ENCODE measurements at regions of chr13 and their contacts with region 1.

Region 1: DNA sequence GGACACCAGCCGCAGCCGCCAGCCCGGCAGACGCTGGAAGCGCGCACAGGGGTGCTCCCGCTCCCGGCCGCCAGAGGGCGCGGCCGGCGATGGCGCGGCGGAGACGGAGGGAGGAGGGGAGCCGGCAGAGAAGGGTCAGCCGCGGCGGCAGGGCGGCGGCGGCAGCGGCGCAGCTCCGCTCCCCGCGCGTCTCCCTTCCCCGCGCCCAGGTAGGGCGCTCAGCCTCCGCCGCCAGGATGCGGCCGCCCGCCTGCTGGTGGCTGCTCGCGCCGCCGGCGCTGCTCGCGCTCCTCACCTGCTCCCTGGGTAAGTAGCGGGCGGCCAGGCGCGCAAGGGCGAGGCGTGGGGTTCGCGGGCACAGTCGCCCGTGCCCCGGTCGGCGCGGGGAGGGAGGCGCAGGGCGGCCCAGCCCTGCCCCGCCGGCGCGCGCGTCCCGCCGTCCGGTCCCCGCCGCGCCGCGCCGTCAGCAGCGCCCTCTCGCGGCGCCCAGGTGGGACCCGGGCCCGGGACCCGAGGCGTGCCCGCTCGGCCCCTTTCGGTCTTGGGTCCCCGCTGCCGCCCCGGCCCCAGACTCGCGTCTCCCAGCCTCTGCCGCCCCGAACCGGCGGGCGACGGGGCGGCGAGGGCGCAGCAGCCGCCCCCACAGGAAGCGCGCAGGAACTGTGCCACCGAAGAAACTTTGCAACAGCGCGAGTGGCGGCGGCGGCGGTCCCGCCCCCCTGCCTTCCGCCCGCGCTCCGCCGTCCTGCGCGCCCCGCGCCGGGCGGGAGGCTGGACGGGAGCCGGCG is at the start of gene B3GLCT:
- DNase-seq: peak; percentile 74 to 86 (median 84)
- H3K4me3 ChIP-seq: peak within 1 kb of the TSS; percentile 19 to 60
- H3K4me3 Mint-ChIP-seq: peak within 1 kb of the TSS; percentile 83 to 90 (median 88)
- H3K27ac ChIP-seq: peak within 1 kb of the TSS; percentile 83
- H3K27ac Mint-ChIP-seq: peak within 1 kb of the TSS; percentile 90 to 96 (median 91)
- H3K4me1 ChIP-seq: peaks cover 13% of the 10 kb centered on the region
- H3K4me1 Mint-ChIP-seq: peaks cover 19 to 23% (median 22%) of the 10 kb centered on the region in 4 donors
- H3K27me3 ChIP-seq: no peaks in the 10 kb centered on the region
- H3K27me3 Mint-ChIP-seq: no peaks in the 10 kb centered on the region
- total RNA-seq, gene B3GLCT: 5.2 to 5.8 TPM

Region 2: GRCh38 chr13:31161828-31162590 is 38.0 kb before region 1 on chr13 and contains the start of gene HSPH1:
- CTCF ChIA-PET with region 1: interaction called, 6 read pairs
- POLR2A ChIA-PET with region 1: interaction called, 37 read pairs
- intact Hi-C with region 1: loop called (anchors 1 kb)
- DNase-seq: peak; percentile 99 to 100 (median 100)
- H3K4me3 ChIP-seq: peak within 1 kb of the TSS; percentile 79 to 96
- H3K4me3 Mint-ChIP-seq: peak within 1 kb of the TSS; percentile 96 to 99 (median 98)
- H3K27ac ChIP-seq: peak within 1 kb of the TSS; percentile 95
- H3K27ac Mint-ChIP-seq: peak within 1 kb of the TSS; percentile 97 to 100 (median 99)
- H3K4me1 ChIP-seq: peaks cover 37% of the 10 kb centered on the region
- H3K4me1 Mint-ChIP-seq: peaks cover 23 to 54% (median 29%) of the 10 kb centered on the region in 4 donors
- H3K27me3 ChIP-seq: no peaks in the 10 kb centered on the region
- H3K27me3 Mint-ChIP-seq: no peaks in the 10 kb centered on the region
- total RNA-seq, gene HSPH1: 68.6 to 75.5 TPM

Region 3: DNA sequence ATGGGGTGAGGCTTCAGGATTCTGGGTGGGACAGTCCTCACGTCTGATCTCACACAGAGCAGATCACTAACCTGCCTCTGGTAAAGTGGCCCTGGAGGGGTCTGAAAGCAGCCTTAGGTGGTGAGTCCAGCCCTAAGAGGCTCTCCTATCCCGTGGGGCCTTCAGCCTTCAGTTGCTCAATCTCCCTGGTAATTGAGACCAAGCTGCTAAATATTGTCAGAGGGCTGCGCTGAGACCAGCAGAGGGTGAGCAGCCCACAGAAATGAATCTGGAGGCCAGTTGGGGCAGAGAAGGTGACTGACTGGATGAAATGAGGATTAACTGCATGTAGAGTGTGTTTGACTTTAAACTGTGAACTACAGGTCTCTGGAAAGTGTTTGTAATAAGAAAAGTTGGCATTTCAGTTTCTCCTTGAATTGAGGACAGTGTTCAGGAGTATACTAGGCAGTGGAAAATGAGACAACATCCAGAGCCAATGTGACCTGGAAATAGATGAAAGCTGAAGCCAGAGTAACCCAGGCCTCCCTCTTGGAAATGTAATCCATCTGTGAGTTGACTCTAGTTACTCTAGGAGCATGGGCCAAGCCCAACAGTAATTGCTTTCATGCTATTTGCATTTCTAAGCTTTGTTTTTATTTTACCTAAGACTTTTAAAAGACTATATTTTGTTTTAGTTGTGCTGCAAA is 24.1 kb before region 1 on chr13:
- CTCF ChIA-PET with region 1: no interaction called
- POLR2A ChIA-PET with region 1: no interaction called
- intact Hi-C with region 1: no loop called
- DNase-seq: no peak
- H3K4me3 ChIP-seq: no peak overlapping the region
- H3K4me3 Mint-ChIP-seq: no peak overlapping the region
- H3K27ac ChIP-seq: no peak overlapping the region
- H3K27ac Mint-ChIP-seq: no peak overlapping the region
- H3K4me1 ChIP-seq: no peaks in the 10 kb centered on the region
- H3K4me1 Mint-ChIP-seq: peaks cover 0 to 5% (median 1%) of the 10 kb centered on the region in 4 donors
- H3K27me3 ChIP-seq: no peaks in the 10 kb centered on the region
- H3K27me3 Mint-ChIP-seq: peaks cover 2 to 7% of the 10 kb centered on the region in 2 donors

Region 4: GRCh38 chr13:31742097-31742734 is 542.2 kb after region 1 on chr13:
- CTCF ChIA-PET with region 1: no interaction called
- POLR2A ChIA-PET with region 1: no interaction called
- intact Hi-C with region 1: loop called (anchors 1 kb)
- DNase-seq: peak; percentile 58 to 66 (median 61)
- H3K4me3 ChIP-seq: no peak overlapping the region
- H3K4me3 Mint-ChIP-seq: peak overlapping the region in 2 of 8 donors; percentile 37 to 58
- H3K27ac ChIP-seq: no peak overlapping the region
- H3K27ac Mint-ChIP-seq: peak overlapping the region in 4 of 7 donors; percentile 2 to 81 (median 42)
- H3K4me1 ChIP-seq: no peaks in the 10 kb centered on the region
- H3K4me1 Mint-ChIP-seq: peaks cover 3 to 4% (median 3%) of the 10 kb centered on the region in 4 donors
- H3K27me3 ChIP-seq: no peaks in the 10 kb centered on the region
- H3K27me3 Mint-ChIP-seq: peaks cover 8 to 9% of the 10 kb centered on the region in 2 donors

Region 5: DNA sequence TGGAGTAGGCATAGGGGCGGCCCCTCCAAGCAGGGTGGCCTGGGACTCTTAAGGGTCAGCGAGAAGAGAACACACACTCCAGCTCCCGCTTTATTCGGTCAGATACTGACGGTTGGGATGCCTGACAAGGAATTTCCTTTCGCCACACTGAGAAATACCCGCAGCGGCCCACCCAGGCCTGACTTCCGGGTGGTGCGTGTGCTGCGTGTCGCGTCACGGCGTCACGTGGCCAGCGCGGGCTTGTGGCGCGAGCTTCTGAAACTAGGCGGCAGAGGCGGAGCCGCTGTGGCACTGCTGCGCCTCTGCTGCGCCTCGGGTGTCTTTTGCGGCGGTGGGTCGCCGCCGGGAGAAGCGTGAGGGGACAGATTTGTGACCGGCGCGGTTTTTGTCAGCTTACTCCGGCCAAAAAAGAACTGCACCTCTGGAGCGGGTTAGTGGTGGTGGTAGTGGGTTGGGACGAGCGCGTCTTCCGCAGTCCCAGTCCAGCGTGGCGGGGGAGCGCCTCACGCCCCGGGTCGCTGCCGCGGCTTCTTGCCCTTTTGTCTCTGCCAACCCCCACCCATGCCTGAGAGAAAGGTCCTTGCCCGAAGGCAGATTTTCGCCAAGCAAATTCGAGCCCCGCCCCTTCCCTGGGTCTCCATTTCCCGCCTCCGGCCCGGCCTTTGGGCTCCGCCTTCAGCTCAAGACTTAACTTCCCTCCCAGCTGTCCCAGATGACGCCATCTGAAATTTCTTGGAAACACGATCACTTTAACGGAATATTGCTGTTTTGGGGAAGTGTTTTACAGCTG is 1115.4 kb after region 1 on chr13 and contains the starts of genes BRCA2 and ZAR1L:
- CTCF ChIA-PET with region 1: no interaction called
- POLR2A ChIA-PET with region 1: no interaction called
- intact Hi-C with region 1: loop called (anchors 10 kb)
- DNase-seq: peak; percentile 85 to 89 (median 87)
- H3K4me3 ChIP-seq: peak within 1 kb of the TSS; percentile 59 to 81
- H3K4me3 Mint-ChIP-seq: peak within 1 kb of the TSS; percentile 91 to 100 (median 96)
- H3K27ac ChIP-seq: peak within 1 kb of the TSS; percentile 99
- H3K27ac Mint-ChIP-seq: peak within 1 kb of the TSS; percentile 98 to 100 (median 100)
- H3K4me1 ChIP-seq: peaks cover 16% of the 10 kb centered on the region
- H3K4me1 Mint-ChIP-seq: peaks cover 7 to 27% (median 11%) of the 10 kb centered on the region in 4 donors
- H3K27me3 ChIP-seq: no peaks in the 10 kb centered on the region
- H3K27me3 Mint-ChIP-seq: no peaks in the 10 kb centered on the region
- total RNA-seq, gene BRCA2: 3.2 TPM
- total RNA-seq, gene ZAR1L: not detected

Measured in CD4-positive, alpha-beta memory T cell (primary cell).